Left colon (tissue), 2 donors: ENCODE measurements at regions of chr12 and their contacts with region 1.

Region 1: GRCh38 chr12:42023733-42024494 is 120.8 kb downstream of the GXYLT1 start:
- DNase-seq: peak; percentile 42 to 65
- ATAC-seq: peak; percentile 74

Region 2: DNA sequence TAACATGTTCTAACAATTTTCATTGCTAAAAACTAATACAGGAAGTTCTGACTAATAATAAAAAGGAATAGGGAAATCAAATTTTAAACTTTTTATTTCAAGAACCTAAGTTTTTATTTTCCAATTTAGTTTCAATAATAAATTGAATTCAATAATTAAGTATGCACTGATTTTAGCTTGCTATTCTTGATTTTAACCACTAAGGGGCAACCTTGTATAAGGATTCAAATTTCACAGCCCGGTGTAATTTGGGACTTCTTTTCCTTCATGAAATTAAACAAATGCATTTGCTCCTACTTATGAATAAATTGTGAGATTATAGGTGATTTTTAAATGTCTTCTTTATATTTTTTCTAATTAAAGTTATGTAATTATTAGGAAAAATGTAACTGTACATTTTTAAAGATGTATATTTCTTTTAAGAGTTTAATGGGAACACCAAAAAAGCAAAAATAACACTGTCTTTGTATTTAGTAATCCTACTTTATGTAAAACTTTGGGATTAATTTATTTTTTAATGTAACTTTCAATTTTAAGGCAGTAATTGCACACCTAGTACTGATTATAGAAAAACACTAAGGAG is 1077.2 kb before region 1 on chr12:
- intact Hi-C with region 1: loop called in 1 of 2 experiments (anchors 5 kb)
- DNase-seq: no peak
- ATAC-seq: no peak

Region 3: DNA sequence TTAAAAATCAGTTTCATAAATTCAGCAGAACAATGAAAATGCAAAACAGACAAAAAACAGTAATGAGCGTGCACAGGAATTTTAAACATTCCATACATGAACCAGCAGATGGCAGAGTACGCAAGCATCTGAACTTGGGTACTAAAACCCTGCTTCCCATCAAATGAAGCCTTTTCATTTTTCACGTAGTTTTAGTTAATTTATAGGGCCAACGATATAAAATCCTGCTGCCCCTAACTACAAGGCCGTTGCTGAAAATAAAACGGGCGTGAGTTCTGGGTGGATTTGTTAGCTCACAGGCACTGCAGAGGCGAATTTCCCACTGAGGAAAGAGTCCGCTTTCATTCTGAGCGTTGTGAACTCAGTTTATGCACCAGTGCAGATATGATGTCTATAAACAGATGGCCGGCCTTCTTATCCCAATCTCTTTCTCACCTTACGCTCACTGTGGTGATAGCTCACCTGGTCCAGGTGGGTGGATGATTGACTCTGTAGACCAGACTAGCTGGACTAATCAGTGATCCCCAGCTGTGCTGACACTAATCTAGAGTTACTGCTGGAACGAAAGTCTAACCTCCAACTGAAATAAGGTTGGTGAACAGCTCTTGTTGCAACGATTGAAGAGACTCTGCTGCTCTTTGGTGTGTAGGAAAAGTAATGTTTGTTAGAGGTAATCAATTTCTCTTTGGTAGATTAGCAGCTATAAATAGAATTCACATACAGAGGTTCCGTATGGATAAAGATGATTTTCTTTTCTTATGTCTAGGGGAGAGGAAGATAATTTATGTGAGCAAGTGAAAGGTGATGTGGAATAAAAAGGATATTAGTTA is 746.6 kb before region 1 on chr12:
- intact Hi-C with region 1: loop called in 1 of 2 experiments (anchors 10 kb)
- DNase-seq: no peak
- ATAC-seq: no peak

Region 4: DNA sequence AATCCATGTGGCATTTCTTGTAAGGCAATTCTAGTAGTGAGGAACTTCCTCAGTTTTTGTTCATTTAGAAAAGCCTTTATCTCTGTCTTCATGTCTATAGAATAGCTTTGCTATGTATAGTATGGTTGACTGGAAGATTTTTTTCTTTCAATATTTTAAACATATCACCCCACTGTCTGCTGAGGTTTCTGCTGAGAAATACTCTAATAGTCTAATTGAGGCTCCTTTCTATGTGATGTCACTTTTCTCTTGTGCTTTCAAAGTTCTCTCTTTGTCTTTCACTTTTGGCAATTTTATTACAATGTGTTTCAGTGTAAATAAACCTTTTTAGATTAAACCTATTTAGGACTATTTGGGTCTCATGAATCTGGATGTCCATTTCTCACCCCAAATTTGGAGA is 643.0 kb before region 1 on chr12:
- intact Hi-C with region 1: no loop called
- DNase-seq: no peak
- ATAC-seq: no peak

Region 5: DNA sequence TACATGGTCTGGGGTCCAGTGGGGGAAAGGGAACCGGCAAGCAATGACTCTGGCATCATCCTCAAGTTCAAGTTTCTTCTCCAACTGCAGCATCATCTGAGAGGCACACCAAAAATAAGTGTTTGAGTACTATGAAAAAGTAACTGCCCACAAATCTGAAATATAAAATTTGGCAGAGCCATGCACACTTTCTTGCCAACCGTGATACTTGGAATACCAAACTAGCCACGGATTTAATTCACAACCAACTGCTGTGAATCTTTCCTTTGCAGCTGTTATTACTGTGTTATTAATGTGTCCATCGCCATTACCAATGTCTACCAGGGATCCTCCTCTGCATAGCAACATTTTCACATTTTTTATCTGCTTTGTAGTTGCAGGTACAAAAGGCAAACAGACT is 46.1 kb after region 1 on chr12:
- intact Hi-C with region 1: no loop called
- DNase-seq: no peak
- ATAC-seq: no peak

Region 6: DNA sequence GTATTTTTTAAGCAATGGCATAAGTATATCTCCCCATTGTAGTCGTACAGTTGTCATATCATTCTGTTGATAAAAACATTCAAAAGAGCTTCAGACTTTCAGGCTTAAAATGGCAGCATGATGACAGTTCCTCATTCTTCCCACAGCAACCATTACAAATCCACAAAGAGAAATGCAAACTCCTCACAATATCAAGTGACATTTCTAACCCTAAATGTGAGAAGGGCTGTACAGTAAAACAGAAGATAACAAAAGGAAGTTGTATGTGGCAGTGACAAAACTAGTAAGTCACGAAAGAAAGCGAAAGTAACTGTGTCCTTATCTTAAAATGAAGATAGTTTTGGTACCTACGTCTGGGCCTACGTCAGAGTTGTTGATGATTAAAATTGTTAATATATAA is 74.1 kb after region 1 on chr12:
- intact Hi-C with region 1: no loop called
- DNase-seq: no peak
- ATAC-seq: peak; percentile 35